Mammary epithelial cell (primary cell): ENCODE measurements at regions of chr6 and their contacts with region 1.

Region 1: DNA sequence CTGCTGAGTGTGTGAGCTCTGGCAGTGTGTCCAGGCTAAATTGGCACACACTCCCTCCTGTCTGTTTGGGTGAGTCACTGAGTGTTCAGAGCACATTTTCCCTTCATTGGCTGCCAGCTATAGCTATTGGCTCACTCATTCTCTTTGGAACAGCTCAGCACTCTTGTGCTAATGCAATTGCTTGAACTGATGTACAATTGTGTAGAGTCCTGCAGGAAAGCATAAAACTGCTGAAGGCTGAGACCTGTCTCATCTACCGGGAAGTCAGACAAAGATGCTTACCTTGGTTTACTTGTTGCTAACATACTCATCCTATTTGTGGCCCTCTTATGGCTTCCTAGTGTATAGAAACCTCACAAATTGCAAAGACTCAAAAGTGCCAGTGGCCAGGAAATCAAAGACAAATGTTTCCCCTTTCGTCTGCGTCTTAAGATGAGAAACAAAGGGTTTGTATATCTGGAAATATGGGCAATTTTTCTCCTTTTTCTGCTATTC is 351.0 kb downstream of the BCKDHB start:
- DNase-seq: peak; percentile 94
- H3K4me3 ChIP-seq: no peak overlapping the region
- H3K27ac ChIP-seq: no peak overlapping the region
- H3K4me1 ChIP-seq: peaks cover 52% of the 10 kb centered on the region
- H3K27me3 ChIP-seq: no peaks in the 10 kb centered on the region
- CTCF ChIP-seq: no peak

Region 2: DNA sequence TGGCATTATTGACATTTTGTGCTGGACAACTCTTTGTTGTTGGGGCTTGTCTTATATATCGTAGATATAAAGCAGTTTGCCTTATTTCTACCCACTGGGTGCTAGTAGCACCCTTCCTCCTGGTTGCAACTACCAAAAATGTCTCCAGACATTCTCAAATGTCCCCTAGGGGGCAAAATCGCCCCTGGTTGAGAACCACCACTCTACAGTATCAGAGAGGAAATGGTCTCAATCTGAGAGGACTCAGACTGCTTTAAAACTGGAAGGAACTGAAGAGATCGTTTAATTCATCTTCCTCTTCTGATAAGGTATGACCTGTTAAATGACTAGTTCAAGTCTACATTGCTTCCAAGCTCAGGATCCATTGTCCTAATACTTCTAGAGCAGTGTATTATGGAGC is 811.5 kb before region 1 on chr6:
- CTCF ChIA-PET with region 1: no interaction called
- dilution Hi-C with region 1: no loop called
- in situ Hi-C with region 1: no loop called
- intact Hi-C with region 1: no loop called
- DNase-seq: no peak
- H3K4me3 ChIP-seq: no peak overlapping the region
- H3K27ac ChIP-seq: no peak overlapping the region
- H3K4me1 ChIP-seq: no peaks in the 10 kb centered on the region
- H3K27me3 ChIP-seq: no peaks in the 10 kb centered on the region
- CTCF ChIP-seq: no peak

Region 3: DNA sequence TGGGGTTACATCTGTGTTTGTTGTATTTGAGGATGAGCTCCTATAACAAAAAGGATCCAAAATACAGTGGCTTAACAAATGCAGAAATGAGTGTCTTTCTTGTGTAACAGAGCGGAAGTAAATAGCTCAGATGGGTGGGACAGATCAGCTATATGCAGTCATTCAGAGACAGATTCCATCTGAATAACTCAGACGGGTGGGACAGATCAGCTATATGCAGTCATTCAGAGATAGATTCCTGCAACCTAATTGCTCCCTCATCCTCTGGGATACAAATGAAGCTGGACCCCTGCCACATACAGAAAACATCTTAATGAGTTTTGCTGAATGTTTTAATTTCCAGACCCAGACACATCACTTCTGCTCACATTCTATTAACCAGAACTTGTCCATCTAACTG is 18.7 kb before region 1 on chr6:
- CTCF ChIA-PET with region 1: no interaction called
- dilution Hi-C with region 1: no loop called
- in situ Hi-C with region 1: no loop called
- intact Hi-C with region 1: loop called (anchors 2 kb)
- DNase-seq: peak; percentile 83
- H3K4me3 ChIP-seq: no peak overlapping the region
- H3K27ac ChIP-seq: peak overlapping the region; percentile 97
- H3K4me1 ChIP-seq: peaks cover 26% of the 10 kb centered on the region
- H3K27me3 ChIP-seq: no peaks in the 10 kb centered on the region
- CTCF ChIP-seq: no peak

Region 4: GRCh38 chr6:80502871-80503270 is 45.4 kb after region 1 on chr6:
- CTCF ChIA-PET with region 1: no interaction called
- dilution Hi-C with region 1: no loop called
- in situ Hi-C with region 1: no loop called
- intact Hi-C with region 1: no loop called
- DNase-seq: no peak
- H3K4me3 ChIP-seq: no peak overlapping the region
- H3K27ac ChIP-seq: no peak overlapping the region
- H3K4me1 ChIP-seq: no peaks in the 10 kb centered on the region
- H3K27me3 ChIP-seq: no peaks in the 10 kb centered on the region
- CTCF ChIP-seq: no peak